ENCODE measurements at regions of chr13 and their contacts with region 1.

Region 1: GRCh38 chr13:100721885-100722512 is 47.4 kb upstream of the TMTC4 start:
- DNase-seq: peak; percentile 40 to 52
- H3K4me3 ChIP-seq: no peak overlapping the region
- H3K27ac ChIP-seq: no peak overlapping the region
- H3K4me1 ChIP-seq: no peaks in the 10 kb centered on the region
- H3K27me3 ChIP-seq: no peaks in the 10 kb centered on the region
- CTCF ChIP-seq: peak; percentile 31 to 62 (median 52)
- POLR2A ChIP-seq: no peak

Region 2: GRCh38 chr13:101013245-101013644 is 291.2 kb after region 1 on chr13:
- intact Hi-C with region 1: no loop called
- DNase-seq: no peak
- H3K4me3 ChIP-seq: no peak overlapping the region
- H3K27ac ChIP-seq: no peak overlapping the region
- H3K4me1 ChIP-seq: no peaks in the 10 kb centered on the region
- H3K27me3 ChIP-seq: no peaks in the 10 kb centered on the region
- CTCF ChIP-seq: no peak
- POLR2A ChIP-seq: no peak

Region 3: GRCh38 chr13:101109005-101109404 is 387.0 kb after region 1 on chr13:
- intact Hi-C with region 1: loop called (anchors 10 kb)
- DNase-seq: no peak
- H3K4me3 ChIP-seq: no peak overlapping the region
- H3K27ac ChIP-seq: no peak overlapping the region
- H3K4me1 ChIP-seq: no peaks in the 10 kb centered on the region
- H3K27me3 ChIP-seq: no peaks in the 10 kb centered on the region
- CTCF ChIP-seq: no peak
- POLR2A ChIP-seq: no peak

Region 4: GRCh38 chr13:101307181-101307701 is 585.2 kb after region 1 on chr13:
- intact Hi-C with region 1: no loop called
- DNase-seq: peak; percentile 48 to 61
- H3K4me3 ChIP-seq: no peak overlapping the region
- H3K27ac ChIP-seq: peak overlapping the region; percentile 1 to 66 (median 29)
- H3K4me1 ChIP-seq: peaks cover 13 to 18% of the 10 kb centered on the region in 2 donors
- H3K27me3 ChIP-seq: no peaks in the 10 kb centered on the region
- CTCF ChIP-seq: no peak
- POLR2A ChIP-seq: no peak